Activated T-helper 2 cell treated with anti-CD3 and anti-CD28 coated beads, Interferon-gamma antibody, Interleukin-2, Interleukin-4, amounts not matched to agents 10 μg/mL and 5 μg/mL and 100 μg/mL, durations not matched to agents 14 hours and 24 hours and 36 hours (primary cell): ENCODE measurements at regions of chr19 and their contacts with region 1.

Region 1: GRCh38 chr19:52601025-52601973 is 31.2 kb downstream of the ZNF701 start:
- DNase-seq: peak; percentile 88
- H3K4me3 Mint-ChIP-seq: peak overlapping the region; percentile 89
- H3K27ac Mint-ChIP-seq: peak overlapping the region; percentile 35
- H3K4me1 Mint-ChIP-seq: peaks cover 10% of the 10 kb centered on the region
- H3K27me3 Mint-ChIP-seq: no peaks in the 10 kb centered on the region

Region 2: DNA sequence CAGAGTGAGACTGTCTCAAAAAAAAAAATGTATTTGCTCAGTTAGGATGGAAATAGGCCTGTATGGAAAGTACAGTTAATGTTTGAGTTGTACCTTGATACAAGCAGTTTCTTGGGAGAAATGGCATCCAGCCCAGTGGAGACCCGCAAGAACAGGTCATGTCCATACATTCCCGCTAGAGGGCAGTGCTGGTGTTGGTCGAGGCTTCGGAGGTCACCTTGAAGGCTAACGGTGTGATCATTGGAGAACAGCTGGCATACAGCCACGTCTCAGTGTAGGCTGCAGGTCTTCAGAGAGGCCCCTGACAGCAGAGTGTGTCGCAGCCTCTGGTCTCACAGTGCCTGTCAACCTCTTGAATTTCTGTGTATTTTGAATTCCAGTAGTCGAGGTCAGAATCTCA is 257.8 kb before region 1 on chr19:
- intact Hi-C with region 1: no loop called
- DNase-seq: peak; percentile 15
- H3K4me3 Mint-ChIP-seq: no peak overlapping the region
- H3K27ac Mint-ChIP-seq: no peak overlapping the region
- H3K4me1 Mint-ChIP-seq: no peaks in the 10 kb centered on the region
- H3K27me3 Mint-ChIP-seq: no peaks in the 10 kb centered on the region

Region 3: GRCh38 chr19:52527134-52527955 is 74.0 kb before region 1 on chr19 and contains the start of gene ZNF808:
- intact Hi-C with region 1: loop called (anchors 1 kb)
- DNase-seq: peak; percentile 87
- H3K4me3 Mint-ChIP-seq: peak within 1 kb of the TSS; percentile 96
- H3K27ac Mint-ChIP-seq: peak within 1 kb of the TSS; percentile 97
- H3K4me1 Mint-ChIP-seq: peaks cover 12% of the 10 kb centered on the region
- H3K27me3 Mint-ChIP-seq: no peaks in the 10 kb centered on the region
- total RNA-seq, gene ZNF808: 20.7 and 22.6 TPM in 2 replicates

Region 4: GRCh38 chr19:52584736-52585440 is 16.4 kb before region 1 on chr19:
- intact Hi-C with region 1: no loop called
- DNase-seq: no peak
- H3K4me3 Mint-ChIP-seq: no peak overlapping the region
- H3K27ac Mint-ChIP-seq: no peak overlapping the region
- H3K4me1 Mint-ChIP-seq: no peaks in the 10 kb centered on the region
- H3K27me3 Mint-ChIP-seq: no peaks in the 10 kb centered on the region